Prostate gland (tissue), 2 donors: ENCODE measurements at regions of chr11 and their contacts with region 1.

Region 1: GRCh38 chr11:119196833-119197483 is 9.2 kb upstream of the CBL start:
- DNase-seq: peak; percentile 73
- H3K4me3 ChIP-seq: no peak overlapping the region
- H3K27ac ChIP-seq: no peak overlapping the region
- H3K4me1 ChIP-seq: no peaks in the 10 kb centered on the region
- H3K27me3 ChIP-seq: no peaks in the 10 kb centered on the region
- CTCF ChIP-seq: peak; percentile 51 to 80 (median 72)
- POLR2A ChIP-seq: no peak

Region 2: DNA sequence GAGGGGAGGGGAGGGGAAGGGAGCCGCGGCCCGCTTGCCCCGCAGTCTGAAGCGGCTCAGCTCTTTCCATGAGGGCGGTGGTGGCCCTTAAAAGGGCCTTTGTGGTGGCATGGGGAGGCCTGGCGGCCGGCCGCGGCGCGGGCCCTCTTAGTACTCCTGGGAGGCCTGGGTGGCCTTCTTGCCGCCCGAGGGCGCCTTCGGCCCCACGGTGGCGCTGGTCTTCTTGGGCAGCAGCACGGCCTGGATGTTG is 102.2 kb before region 1 on chr11:
- intact Hi-C with region 1: loop called (anchors 5 kb)
- DNase-seq: peak; percentile 81
- H3K4me3 ChIP-seq: peak overlapping the region; percentile 67 to 72
- H3K27ac ChIP-seq: peak overlapping the region; percentile 93 to 94
- H3K4me1 ChIP-seq: peaks cover 10% of the 10 kb centered on the region
- H3K27me3 ChIP-seq: no peaks in the 10 kb centered on the region
- CTCF ChIP-seq: peak; percentile 49 to 80 (median 70)
- POLR2A ChIP-seq: no peak